ENCODE measurements at regions of chr3 and their contacts with region 1.

Region 1: GRCh38 chr3:188154014-188154808 is at the start of gene LPP:
- DNase-seq: peak in 1 of 2 donors; percentile 85
- H3K4me3 ChIP-seq: peak within 1 kb of the TSS; percentile 72 to 90 (median 77)
- H3K27ac ChIP-seq: peak within 1 kb of the TSS; percentile 97 to 98
- H3K4me1 ChIP-seq: peaks cover 1 to 14% of the 10 kb centered on the region in 2 donors
- H3K27me3 ChIP-seq: no peaks in the 10 kb centered on the region
- CTCF ChIP-seq: no peak
- POLR2A ChIP-seq: no peak
- total RNA-seq, gene LPP: 135 to 183 (median 147) TPM

Region 2: GRCh38 chr3:187745201-187746058 is 408.8 kb before region 1 on chr3 and contains the start of gene BCL6:
- intact Hi-C with region 1: loop called (anchors 10 kb)
- DNase-seq: peak; percentile 93 to 95
- H3K4me3 ChIP-seq: peak within 1 kb of the TSS; percentile 64 to 93 (median 73)
- H3K27ac ChIP-seq: peak within 1 kb of the TSS; percentile 99
- H3K4me1 ChIP-seq: peaks cover 0 to 14% of the 10 kb centered on the region in 2 donors
- H3K27me3 ChIP-seq: no peaks in the 10 kb centered on the region
- CTCF ChIP-seq: peak in 1 of 3 donors; percentile 28
- POLR2A ChIP-seq: peak; percentile 99
- total RNA-seq, gene BCL6: 281 to 346 (median 283) TPM

Region 3: GRCh38 chr3:188106887-188107830 is 47.1 kb before region 1 on chr3:
- intact Hi-C with region 1: no loop called
- DNase-seq: no peak
- H3K4me3 ChIP-seq: no peak overlapping the region
- H3K27ac ChIP-seq: no peak overlapping the region
- H3K4me1 ChIP-seq: no peaks in the 10 kb centered on the region
- H3K27me3 ChIP-seq: no peaks in the 10 kb centered on the region
- CTCF ChIP-seq: no peak
- POLR2A ChIP-seq: no peak

Region 4: GRCh38 chr3:188270423-188270972 is 116.3 kb after region 1 on chr3:
- intact Hi-C with region 1: loop called (anchors 10 kb)
- DNase-seq: peak in 1 of 2 donors; percentile 77
- H3K4me3 ChIP-seq: no peak overlapping the region
- H3K27ac ChIP-seq: peak overlapping the region; percentile 80 to 83
- H3K4me1 ChIP-seq: peaks cover 0 to 10% of the 10 kb centered on the region in 2 donors
- H3K27me3 ChIP-seq: no peaks in the 10 kb centered on the region
- CTCF ChIP-seq: no peak
- POLR2A ChIP-seq: no peak

Measured in breast epithelium (tissue), 4 donors.